Prostate gland (tissue), 2 donors: ENCODE measurements at regions of chr12 and their contacts with region 1.

Region 1: DNA sequence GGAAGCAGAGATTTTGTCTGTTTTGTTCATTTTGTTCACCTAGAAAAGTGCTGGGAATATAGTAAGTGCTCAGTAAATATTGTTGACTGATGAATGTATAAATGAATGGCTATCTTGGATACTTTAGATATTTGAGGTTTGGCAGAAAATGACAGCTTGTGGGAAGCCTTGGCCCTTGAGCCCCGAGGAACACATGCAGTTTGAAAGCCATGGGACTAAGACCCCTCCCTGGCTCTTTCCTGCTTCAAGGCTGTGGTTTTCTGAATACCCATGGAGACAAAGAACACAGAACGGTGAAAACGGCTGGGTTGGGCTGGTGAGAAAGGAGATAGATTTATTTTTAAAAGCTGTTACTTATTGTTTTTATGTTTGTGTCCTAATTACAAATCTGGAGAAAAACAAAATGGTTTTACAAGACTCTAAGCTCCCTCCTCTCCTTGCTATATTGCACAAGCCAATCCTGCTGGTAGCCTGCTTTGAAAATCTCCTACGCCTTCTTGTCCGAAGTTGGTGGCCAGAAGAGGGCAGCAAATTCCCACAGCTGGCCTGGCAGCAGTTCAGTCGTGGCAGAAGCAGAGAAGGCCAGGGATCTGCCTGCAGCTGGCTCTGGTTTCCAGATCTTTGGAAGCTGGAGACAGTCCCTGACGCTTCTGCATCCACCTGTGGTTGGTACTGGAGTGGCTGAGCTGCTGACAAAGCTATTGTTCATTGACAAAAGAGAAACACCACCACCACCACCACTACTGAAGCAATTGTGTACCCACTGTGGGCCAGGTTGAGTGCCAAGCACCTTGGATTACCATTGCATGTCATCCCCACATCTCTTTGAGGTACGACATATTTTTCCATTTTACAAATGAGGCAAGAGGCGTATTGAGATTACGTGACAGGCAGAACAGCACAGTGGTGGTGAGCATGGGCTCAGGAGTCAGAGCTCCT is 5.2 kb upstream of the KRT85 start:
- DNase-seq: peak; percentile 88
- H3K4me3 ChIP-seq: no peak overlapping the region
- H3K27ac ChIP-seq: no peak overlapping the region
- H3K4me1 ChIP-seq: no peaks in the 10 kb centered on the region
- H3K27me3 ChIP-seq: no peaks in the 10 kb centered on the region
- CTCF ChIP-seq: peak; percentile 68 to 92 (median 79)
- POLR2A ChIP-seq: no peak

Region 2: DNA sequence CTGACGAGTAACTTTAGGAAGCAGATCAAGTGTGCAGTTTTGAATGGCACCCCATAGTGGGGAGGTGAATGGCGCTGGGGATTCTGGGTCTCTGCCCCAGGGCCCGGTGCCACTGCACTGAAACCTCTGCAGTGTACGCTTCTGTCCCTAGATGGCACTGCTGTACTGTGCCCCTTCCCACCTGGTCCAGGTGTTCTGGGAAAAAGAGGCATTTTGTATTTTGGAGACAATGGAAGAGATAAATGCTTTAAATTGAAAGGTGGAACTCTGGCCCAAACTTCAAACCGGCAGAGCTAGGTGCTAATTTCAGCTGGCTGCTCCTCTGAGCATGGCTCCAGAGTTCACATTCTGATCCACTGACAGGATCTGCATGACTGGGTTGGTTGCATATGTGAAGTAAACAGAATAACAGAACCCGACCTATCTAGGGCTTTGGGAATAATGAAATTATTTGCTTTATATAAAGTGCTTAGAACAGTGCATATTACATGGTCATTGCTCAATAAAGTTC is 232.9 kb before region 1 on chr12:
- intact Hi-C with region 1: no loop called
- DNase-seq: no peak
- H3K4me3 ChIP-seq: no peak overlapping the region
- H3K27ac ChIP-seq: no peak overlapping the region
- H3K4me1 ChIP-seq: peaks cover 11% of the 10 kb centered on the region
- H3K27me3 ChIP-seq: no peaks in the 10 kb centered on the region
- CTCF ChIP-seq: peak in 3 of 4 experiments; percentile 65 to 90 (median 85)
- POLR2A ChIP-seq: no peak

Region 3: DNA sequence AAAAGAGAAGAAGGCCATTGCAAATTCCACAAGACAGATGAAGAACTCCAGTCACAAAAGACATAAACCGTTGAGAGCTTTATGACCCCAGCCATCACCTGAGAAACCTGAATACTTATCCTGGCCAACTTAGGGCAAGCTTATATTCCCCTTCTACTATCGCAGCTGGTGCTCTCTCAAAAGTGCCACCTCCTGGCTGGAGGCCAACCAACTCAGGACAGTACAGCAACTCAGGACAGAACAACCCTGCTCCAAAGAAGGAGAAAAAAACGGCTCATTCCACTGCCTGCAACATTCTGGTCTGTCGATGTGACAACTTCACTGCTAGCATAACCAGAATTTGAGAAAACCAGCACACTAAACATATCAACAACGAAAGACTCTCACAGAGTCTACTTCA is 89.2 kb after region 1 on chr12:
- intact Hi-C with region 1: no loop called
- DNase-seq: peak; percentile 19
- H3K4me3 ChIP-seq: no peak overlapping the region
- H3K27ac ChIP-seq: no peak overlapping the region
- H3K4me1 ChIP-seq: no peaks in the 10 kb centered on the region
- H3K27me3 ChIP-seq: no peaks in the 10 kb centered on the region
- CTCF ChIP-seq: no peak
- POLR2A ChIP-seq: no peak

Region 4: DNA sequence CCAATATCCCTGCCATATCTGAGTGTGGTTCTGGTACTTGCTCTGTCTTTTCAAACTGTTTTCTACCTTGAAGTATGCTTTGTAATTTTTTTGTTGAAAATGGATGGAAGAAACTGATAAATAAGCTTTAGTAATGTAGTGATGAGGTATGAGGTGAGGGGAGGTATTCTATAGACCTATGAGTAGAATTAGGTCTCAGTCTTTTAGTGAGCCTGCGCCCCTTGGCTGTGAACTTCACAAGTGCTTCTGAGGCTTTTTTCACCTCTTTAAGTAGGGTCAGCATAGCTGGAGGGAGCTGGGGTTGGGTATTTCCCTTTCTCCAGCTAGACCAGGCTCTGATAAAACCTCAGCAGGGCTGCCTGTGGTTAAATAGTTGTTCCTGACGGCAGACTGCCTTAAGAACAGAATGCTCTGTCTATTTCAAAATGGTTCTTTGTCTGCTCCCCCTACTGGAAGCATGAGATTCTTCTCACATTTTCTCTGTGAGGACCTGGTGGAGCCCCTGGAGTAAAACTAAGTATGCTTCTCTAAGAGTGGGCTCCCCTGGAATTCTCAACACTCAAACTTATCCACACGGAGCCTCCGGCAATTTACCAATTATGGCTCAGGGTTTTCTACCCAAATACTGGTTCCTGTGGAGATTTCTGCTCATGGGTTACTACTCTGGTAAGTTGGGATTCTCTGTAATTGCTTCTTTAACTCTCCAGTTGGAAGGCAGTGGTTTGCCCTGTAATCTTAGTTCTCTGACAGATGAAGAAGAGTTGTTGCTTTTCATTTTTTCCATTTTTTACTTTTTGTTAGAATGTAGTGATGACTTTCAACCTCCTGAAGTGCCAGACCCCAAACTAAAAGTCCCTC is 134.6 kb after region 1 on chr12:
- intact Hi-C with region 1: loop called (anchors 5 kb)
- DNase-seq: no peak
- H3K4me3 ChIP-seq: no peak overlapping the region
- H3K27ac ChIP-seq: no peak overlapping the region
- H3K4me1 ChIP-seq: no peaks in the 10 kb centered on the region
- H3K27me3 ChIP-seq: no peaks in the 10 kb centered on the region
- CTCF ChIP-seq: peak in 3 of 4 experiments; percentile 46 to 66 (median 63)
- POLR2A ChIP-seq: no peak

Region 5: DNA sequence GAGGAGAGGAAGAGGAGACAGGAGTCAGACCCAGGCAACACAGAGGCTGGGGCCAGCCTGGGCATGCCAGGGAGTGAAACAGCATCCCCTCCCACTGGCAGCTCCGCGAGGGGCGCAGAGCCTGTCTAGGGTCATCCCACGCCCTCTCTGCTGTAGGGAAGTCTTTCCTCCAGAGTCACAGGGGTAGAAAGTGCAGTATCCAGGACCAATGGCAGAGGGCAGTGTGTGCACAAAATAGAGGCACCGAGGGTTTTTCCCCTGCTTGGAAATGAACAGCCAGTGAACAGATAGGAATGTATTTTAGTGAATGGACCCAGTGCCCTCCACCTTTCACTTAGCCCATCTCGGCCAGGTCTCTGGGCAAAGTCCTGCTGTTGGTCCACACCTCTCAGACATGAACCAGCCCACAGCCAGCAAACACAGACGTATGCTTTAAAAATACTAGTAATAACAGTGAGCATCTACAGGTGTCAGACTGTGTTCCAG is 210.5 kb after region 1 on chr12:
- intact Hi-C with region 1: loop called (anchors 5 kb)
- DNase-seq: peak; percentile 72
- H3K4me3 ChIP-seq: no peak overlapping the region
- H3K27ac ChIP-seq: no peak overlapping the region
- H3K4me1 ChIP-seq: no peaks in the 10 kb centered on the region
- H3K27me3 ChIP-seq: no peaks in the 10 kb centered on the region
- CTCF ChIP-seq: peak; percentile 41 to 92 (median 78)
- POLR2A ChIP-seq: no peak

Region 6: DNA sequence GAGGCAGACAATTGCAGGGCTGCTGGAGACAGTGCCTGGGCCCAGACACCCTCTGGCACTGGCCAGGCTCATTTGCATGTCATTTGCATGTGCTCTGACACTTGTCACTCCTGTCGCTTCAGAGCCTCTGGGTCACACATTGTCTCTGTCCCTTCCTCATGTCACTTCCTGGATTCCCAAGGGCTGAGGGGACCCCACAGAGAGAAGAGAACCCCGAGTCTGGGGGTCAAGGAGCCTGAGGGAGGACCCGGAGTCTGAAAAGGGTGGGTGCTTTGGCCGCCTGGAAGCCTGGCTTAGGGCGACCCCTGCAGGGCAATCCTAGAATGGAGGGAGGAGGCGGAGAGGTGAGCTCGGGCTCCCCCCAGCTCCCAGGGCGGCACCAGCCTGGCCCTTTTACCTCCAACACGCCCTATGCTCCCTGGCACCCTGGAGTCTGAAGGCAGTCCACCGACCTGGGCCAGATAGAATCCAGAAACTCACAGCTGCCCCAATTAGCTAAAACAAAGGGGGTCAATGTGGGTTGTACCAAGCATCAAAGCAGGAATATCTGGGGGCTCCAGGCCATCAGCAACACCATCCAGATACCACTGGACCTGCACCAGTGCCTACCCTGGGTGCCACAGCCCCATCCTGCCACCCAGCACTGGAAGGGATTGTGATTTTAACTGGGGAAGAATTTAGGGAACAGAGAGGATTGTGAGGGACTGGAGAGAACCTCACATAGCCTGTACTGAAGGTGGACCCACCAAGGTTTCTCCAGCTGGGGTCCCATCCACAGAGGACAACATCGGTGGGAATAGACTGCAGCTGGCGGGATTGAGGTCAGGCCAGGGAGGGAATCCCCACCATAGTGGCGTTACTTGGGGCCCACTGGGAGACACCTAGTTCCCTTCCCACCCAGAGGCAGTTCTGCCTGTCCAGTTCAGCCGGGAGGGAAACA is 498.1 kb after region 1 on chr12:
- intact Hi-C with region 1: loop called (anchors 5 kb)
- DNase-seq: peak; percentile 46
- H3K4me3 ChIP-seq: no peak overlapping the region
- H3K27ac ChIP-seq: peak overlapping the region; percentile 42 to 43
- H3K4me1 ChIP-seq: no peaks in the 10 kb centered on the region
- H3K27me3 ChIP-seq: no peaks in the 10 kb centered on the region
- CTCF ChIP-seq: peak; percentile 30 to 87 (median 64)
- POLR2A ChIP-seq: peak; percentile 9